B cell (primary cell): ENCODE measurements at regions of chr14 and their contacts with region 1.

Region 1: DNA sequence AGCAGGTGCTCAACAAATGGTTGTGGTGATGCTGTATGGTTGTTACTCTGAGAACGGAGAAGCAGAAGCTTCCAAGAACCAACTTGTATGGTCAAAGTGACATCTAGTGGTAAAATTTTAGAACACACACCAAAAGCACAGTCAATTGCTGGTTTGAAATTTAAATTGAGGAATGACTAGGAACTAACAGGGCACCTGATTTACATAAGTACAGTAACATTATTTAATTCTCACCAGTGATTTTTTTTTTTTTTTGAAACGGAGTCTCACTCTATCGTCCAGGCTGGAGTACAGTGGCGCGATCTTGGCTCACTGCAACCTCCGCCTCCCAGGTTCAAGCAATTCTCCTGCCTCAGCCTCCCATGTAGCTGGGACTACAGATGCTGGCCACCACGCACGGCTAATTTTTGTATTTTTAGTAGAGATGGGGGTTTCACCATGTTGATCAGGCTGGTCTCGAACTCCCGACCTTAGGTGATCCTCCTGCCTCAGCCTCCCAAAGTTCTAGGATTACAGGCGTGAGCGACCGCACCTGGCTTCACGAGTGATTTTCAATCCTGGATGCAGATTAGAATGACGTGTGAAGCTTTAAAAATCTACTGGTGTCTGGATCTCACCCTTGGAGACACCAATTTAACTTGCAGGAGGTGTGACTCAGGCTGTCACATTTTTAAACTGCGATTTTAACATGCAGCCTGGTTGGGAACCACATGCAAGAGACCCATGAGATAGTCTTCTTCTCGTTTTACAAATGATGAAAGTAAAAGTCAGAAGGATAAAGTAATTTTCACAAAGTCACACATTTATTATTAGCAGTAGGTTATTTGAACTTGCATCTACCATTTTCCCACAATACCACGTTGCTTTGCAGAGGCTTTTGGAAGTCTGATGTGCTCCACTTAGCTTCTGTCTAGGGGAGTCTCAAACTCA is 14.1 kb upstream of the NUMB start:
- DNase-seq: peak; percentile 81
- ATAC-seq: peak; percentile 93
- H3K4me3 ChIP-seq: no peak overlapping the region
- H3K4me3 Mint-ChIP-seq: no peak overlapping the region
- H3K27ac ChIP-seq: no peak overlapping the region
- H3K27ac Mint-ChIP-seq: no peak overlapping the region
- H3K4me1 ChIP-seq: peaks cover 0 to 2% of the 10 kb centered on the region in 2 donors
- H3K4me1 Mint-ChIP-seq: peaks cover 3% of the 10 kb centered on the region
- H3K27me3 ChIP-seq: no peaks in the 10 kb centered on the region
- H3K27me3 Mint-ChIP-seq: no peaks in the 10 kb centered on the region
- CTCF ChIP-seq: peak; percentile 80

Region 2: GRCh38 chr14:72315720-72316119 is 1156.7 kb before region 1 on chr14:
- CTCF ChIA-PET with region 1: no interaction called
- POLR2A ChIA-PET with region 1: no interaction called
- intact Hi-C with region 1: no loop called
- DNase-seq: no peak
- ATAC-seq: no peak
- H3K4me3 ChIP-seq: no peak overlapping the region
- H3K4me3 Mint-ChIP-seq: no peak overlapping the region
- H3K27ac ChIP-seq: no peak overlapping the region
- H3K27ac Mint-ChIP-seq: no peak overlapping the region
- H3K4me1 ChIP-seq: no peaks in the 10 kb centered on the region
- H3K4me1 Mint-ChIP-seq: no peaks in the 10 kb centered on the region
- H3K27me3 ChIP-seq: peaks cover 0 to 25% (median 8%) of the 10 kb centered on the region in 4 experiments
- H3K27me3 Mint-ChIP-seq: peaks cover 49% of the 10 kb centered on the region
- CTCF ChIP-seq: no peak

Region 3: DNA sequence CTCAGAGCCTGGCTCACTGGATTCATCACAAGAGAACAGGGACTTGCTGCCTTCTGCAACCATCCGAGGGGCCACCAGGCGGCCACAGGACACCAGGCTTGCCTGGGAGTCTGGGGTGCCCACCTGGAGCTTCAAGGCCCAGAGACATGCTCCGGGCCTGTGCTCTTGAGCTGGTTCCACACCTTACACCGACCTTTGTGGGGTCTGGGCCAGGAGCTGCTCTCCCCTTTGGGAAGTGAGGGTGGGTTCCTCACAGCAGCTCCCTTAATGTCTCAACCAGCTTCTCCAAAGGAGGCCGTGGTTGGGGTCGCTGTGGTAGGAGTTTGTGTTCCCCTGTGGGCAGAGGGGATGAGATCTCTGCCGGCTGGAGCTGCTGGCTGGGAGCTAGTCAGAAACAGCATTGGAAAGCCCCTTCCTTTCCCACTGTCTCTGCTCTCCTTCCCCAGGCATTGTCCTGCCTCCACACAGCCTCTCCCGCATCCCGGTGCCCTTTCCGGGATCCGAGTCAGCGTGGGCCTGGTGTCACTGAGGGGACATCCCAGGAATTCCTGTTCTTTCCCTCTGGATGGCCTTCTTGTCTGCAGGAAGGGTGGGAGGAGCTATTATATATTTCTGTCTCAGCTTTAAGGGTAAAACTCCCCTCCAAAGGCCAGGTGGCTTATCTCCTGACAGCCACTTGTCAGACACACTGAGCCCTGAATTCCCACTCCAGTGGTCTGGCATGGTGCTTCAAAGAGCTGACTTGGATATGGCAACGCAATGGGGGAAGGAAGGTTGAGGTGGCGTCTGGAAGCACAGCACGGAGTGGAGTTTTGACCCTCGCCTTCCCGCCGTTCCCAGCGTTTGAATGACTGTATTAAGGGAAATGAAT is 240.2 kb before region 1 on chr14:
- CTCF ChIA-PET with region 1: interaction called, 12 read pairs
- POLR2A ChIA-PET with region 1: no interaction called
- intact Hi-C with region 1: loop called (anchors 2 kb)
- DNase-seq: peak; percentile 35
- ATAC-seq: peak; percentile 24
- H3K4me3 ChIP-seq: no peak overlapping the region
- H3K4me3 Mint-ChIP-seq: no peak overlapping the region
- H3K27ac ChIP-seq: no peak overlapping the region
- H3K27ac Mint-ChIP-seq: no peak overlapping the region
- H3K4me1 ChIP-seq: peaks cover 8 to 12% of the 10 kb centered on the region in 2 donors
- H3K4me1 Mint-ChIP-seq: peaks cover 16% of the 10 kb centered on the region
- H3K27me3 ChIP-seq: peaks cover 0 to 49% (median 14%) of the 10 kb centered on the region in 4 experiments
- H3K27me3 Mint-ChIP-seq: peaks cover 33% of the 10 kb centered on the region
- CTCF ChIP-seq: peak; percentile 42

Region 4: DNA sequence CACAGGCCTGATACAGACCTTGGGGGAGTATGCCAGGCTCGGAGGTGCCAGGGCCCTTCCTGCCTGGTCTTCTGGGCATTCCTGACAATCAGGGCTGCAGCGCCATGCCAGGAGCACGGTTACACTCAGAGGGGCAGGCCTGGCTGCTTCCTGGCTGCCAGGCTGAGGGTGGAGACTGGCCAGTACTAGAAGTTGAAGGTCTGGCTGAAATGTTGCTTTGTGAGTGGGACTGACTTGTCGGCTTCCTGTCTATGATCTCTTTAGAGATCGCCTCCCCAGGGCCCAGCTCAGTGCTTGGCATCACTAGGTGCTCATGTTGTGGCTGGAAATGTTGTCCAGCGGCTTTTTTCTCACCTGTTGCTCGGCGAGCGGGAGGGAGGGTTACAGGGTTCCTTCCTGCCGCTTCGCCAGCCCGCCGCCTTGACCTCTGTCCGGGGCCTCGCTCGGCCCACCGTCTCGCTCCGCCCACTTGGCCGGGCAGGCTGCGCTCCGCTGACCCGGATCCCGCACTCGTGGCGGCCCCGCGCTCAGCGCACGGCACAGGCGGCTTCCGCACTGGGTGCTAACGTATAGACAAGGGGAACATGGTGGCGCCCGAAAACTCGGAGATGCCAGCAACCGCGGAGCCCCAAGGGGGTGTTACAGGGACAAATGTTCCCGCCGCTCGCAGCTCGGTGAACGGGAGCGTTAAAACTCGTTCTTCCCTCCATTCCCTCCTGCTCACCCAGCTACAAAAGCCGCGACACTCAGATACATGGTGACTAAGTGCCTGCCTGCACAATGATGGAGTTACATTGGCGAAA is 202.5 kb before region 1 on chr14:
- CTCF ChIA-PET with region 1: interaction called, 13 read pairs
- POLR2A ChIA-PET with region 1: no interaction called
- intact Hi-C with region 1: no loop called
- DNase-seq: peak; percentile 65
- ATAC-seq: peak; percentile 81
- H3K4me3 ChIP-seq: peak overlapping the region; percentile 6 to 69 (median 52)
- H3K4me3 Mint-ChIP-seq: peak overlapping the region; percentile 91
- H3K27ac ChIP-seq: no peak overlapping the region
- H3K27ac Mint-ChIP-seq: peak overlapping the region; percentile 86
- H3K4me1 ChIP-seq: peaks cover 11 to 13% of the 10 kb centered on the region in 2 donors
- H3K4me1 Mint-ChIP-seq: peaks cover 25% of the 10 kb centered on the region
- H3K27me3 ChIP-seq: no peaks in the 10 kb centered on the region
- H3K27me3 Mint-ChIP-seq: no peaks in the 10 kb centered on the region
- CTCF ChIP-seq: no peak

Region 5: GRCh38 chr14:73372529-73372928 is 99.9 kb before region 1 on chr14:
- CTCF ChIA-PET with region 1: interaction called, 10 read pairs
- POLR2A ChIA-PET with region 1: interaction called, 6 read pairs
- intact Hi-C with region 1: no loop called
- DNase-seq: no peak
- ATAC-seq: no peak
- H3K4me3 ChIP-seq: no peak overlapping the region
- H3K4me3 Mint-ChIP-seq: no peak overlapping the region
- H3K27ac ChIP-seq: no peak overlapping the region
- H3K27ac Mint-ChIP-seq: no peak overlapping the region
- H3K4me1 ChIP-seq: no peaks in the 10 kb centered on the region
- H3K4me1 Mint-ChIP-seq: peaks cover 24% of the 10 kb centered on the region
- H3K27me3 ChIP-seq: no peaks in the 10 kb centered on the region
- H3K27me3 Mint-ChIP-seq: no peaks in the 10 kb centered on the region
- CTCF ChIP-seq: no peak

Region 6: DNA sequence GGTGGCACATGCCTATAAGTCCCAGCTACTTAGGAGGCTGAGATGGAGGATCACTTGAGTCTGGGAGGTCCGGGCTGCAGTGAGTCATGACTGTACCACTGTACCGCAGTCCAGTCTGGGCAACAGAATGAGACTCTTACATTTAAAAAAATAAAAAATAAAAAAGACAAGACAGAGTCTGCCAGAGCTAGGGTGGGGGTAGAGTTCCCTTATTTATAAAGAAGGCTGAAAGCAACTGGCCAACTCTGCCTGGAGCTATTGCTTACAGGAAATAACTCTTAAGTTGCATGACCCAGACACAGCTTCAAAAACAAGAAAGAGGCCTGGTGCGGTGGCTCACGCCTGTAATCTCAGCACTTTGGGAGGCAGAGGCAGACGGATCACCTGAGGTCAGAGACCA is 45.6 kb before region 1 on chr14:
- CTCF ChIA-PET with region 1: no interaction called
- POLR2A ChIA-PET with region 1: no interaction called
- intact Hi-C with region 1: no loop called
- DNase-seq: no peak
- ATAC-seq: no peak
- H3K4me3 ChIP-seq: no peak overlapping the region
- H3K4me3 Mint-ChIP-seq: no peak overlapping the region
- H3K27ac ChIP-seq: peak overlapping the region; percentile 12 to 61
- H3K27ac Mint-ChIP-seq: peak overlapping the region; percentile 87
- H3K4me1 ChIP-seq: peaks cover 29 to 38% of the 10 kb centered on the region in 2 donors
- H3K4me1 Mint-ChIP-seq: peaks cover 49% of the 10 kb centered on the region
- H3K27me3 ChIP-seq: no peaks in the 10 kb centered on the region
- H3K27me3 Mint-ChIP-seq: no peaks in the 10 kb centered on the region
- CTCF ChIP-seq: no peak